Mammary epithelial cell (primary cell): ENCODE measurements at regions of chr10 and their contacts with region 1.

Region 1: GRCh38 chr10:122688293-122688994 is 11.2 kb downstream of the C10orf120 start:
- DNase-seq: peak; percentile 9
- H3K4me3 ChIP-seq: no peak overlapping the region
- H3K27ac ChIP-seq: no peak overlapping the region
- H3K4me1 ChIP-seq: no peaks in the 10 kb centered on the region
- H3K27me3 ChIP-seq: peaks cover 3% of the 10 kb centered on the region
- CTCF ChIP-seq: no peak

Region 2: DNA sequence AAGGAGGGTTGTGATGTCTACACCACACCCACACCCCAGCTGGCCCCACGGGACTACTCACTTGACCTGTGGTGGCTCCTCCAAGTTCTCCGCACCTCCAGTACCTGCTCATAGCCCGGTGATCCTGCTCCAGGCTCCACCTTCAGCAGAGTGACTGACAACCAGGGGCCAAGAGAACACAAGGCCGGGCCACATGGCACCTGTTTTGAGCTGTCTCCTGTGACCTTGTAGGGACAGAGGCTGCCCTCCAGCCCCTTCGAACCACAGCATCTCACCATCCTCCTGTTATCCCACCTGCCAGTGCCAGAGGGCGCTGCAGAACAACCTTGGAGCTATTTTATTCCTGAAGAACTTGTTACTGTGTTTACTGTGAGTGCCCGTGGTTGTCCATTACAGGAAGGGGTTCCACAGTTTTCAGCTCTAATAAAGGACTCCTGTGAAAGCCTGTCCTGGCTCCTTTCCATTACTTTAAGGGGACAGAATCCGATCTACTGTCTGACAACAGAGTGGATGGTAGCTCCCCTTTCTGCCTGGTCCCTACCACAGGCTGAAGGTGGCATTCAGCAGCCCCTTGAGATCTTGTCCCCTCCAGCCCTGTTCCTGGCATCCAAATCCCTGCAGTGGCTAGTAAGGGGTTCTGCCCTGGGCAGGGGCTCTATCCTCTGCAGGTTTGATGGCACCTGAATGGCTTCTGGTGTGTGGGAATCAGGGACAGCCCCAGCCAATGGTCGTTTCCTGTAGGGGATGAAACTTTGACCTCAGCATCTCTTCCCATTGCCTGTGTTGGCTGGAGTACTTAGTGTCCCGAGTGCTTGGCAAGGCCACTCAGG is 39.6 kb before region 1 on chr10:
- CTCF ChIA-PET with region 1: no interaction called
- dilution Hi-C with region 1: no loop called
- in situ Hi-C with region 1: no loop called
- intact Hi-C with region 1: loop called (anchors 5 kb)
- DNase-seq: peak; percentile 16
- H3K4me3 ChIP-seq: no peak overlapping the region
- H3K27ac ChIP-seq: no peak overlapping the region
- H3K4me1 ChIP-seq: no peaks in the 10 kb centered on the region
- H3K27me3 ChIP-seq: no peaks in the 10 kb centered on the region
- CTCF ChIP-seq: peak; percentile 87

Region 3: GRCh38 chr10:123027861-123028260 is 339.4 kb after region 1 on chr10:
- CTCF ChIA-PET with region 1: no interaction called
- dilution Hi-C with region 1: no loop called
- in situ Hi-C with region 1: no loop called
- intact Hi-C with region 1: no loop called
- DNase-seq: peak; percentile 75
- H3K4me3 ChIP-seq: no peak overlapping the region
- H3K27ac ChIP-seq: no peak overlapping the region
- H3K4me1 ChIP-seq: no peaks in the 10 kb centered on the region
- H3K27me3 ChIP-seq: no peaks in the 10 kb centered on the region
- CTCF ChIP-seq: no peak